Activated CD4-positive, alpha-beta memory T cell treated with anti-CD3 and anti-CD28 coated beads for 36 hours (primary cell): ENCODE measurements at regions of chr17 and their contacts with region 1.

Region 1: GRCh38 chr17:57440522-57441485 is 184.5 kb downstream of the MSI2 start:
- DNase-seq: peak; percentile 93
- H3K4me3 Mint-ChIP-seq: peak overlapping the region; percentile 37
- H3K27ac Mint-ChIP-seq: peak overlapping the region; percentile 98
- H3K4me1 Mint-ChIP-seq: peaks cover 84% of the 10 kb centered on the region
- H3K27me3 Mint-ChIP-seq: no peaks in the 10 kb centered on the region

Region 2: GRCh38 chr17:57130761-57131461 is 309.9 kb before region 1 on chr17:
- CTCF ChIA-PET with region 1: no interaction called
- POLR2A ChIA-PET with region 1: no interaction called
- intact Hi-C with region 1: loop called (anchors 2 kb)
- DNase-seq: peak; percentile 86
- H3K4me3 Mint-ChIP-seq: no peak overlapping the region
- H3K27ac Mint-ChIP-seq: no peak overlapping the region
- H3K4me1 Mint-ChIP-seq: peaks cover 4% of the 10 kb centered on the region
- H3K27me3 Mint-ChIP-seq: no peaks in the 10 kb centered on the region

Region 3: GRCh38 chr17:57255776-57256681 is 184.8 kb before region 1 on chr17 and contains the start of gene MSI2:
- CTCF ChIA-PET with region 1: interaction called, 13 read pairs
- POLR2A ChIA-PET with region 1: interaction called, 6 read pairs
- intact Hi-C with region 1: loop called (anchors 1 kb)
- DNase-seq: peak; percentile 90
- H3K4me3 Mint-ChIP-seq: peak within 1 kb of the TSS; percentile 85
- H3K27ac Mint-ChIP-seq: peak within 1 kb of the TSS; percentile 85
- H3K4me1 Mint-ChIP-seq: peaks cover 41% of the 10 kb centered on the region
- H3K27me3 Mint-ChIP-seq: no peaks in the 10 kb centered on the region
- total RNA-seq, gene MSI2: 65.7 to 71.9 TPM

Region 4: DNA sequence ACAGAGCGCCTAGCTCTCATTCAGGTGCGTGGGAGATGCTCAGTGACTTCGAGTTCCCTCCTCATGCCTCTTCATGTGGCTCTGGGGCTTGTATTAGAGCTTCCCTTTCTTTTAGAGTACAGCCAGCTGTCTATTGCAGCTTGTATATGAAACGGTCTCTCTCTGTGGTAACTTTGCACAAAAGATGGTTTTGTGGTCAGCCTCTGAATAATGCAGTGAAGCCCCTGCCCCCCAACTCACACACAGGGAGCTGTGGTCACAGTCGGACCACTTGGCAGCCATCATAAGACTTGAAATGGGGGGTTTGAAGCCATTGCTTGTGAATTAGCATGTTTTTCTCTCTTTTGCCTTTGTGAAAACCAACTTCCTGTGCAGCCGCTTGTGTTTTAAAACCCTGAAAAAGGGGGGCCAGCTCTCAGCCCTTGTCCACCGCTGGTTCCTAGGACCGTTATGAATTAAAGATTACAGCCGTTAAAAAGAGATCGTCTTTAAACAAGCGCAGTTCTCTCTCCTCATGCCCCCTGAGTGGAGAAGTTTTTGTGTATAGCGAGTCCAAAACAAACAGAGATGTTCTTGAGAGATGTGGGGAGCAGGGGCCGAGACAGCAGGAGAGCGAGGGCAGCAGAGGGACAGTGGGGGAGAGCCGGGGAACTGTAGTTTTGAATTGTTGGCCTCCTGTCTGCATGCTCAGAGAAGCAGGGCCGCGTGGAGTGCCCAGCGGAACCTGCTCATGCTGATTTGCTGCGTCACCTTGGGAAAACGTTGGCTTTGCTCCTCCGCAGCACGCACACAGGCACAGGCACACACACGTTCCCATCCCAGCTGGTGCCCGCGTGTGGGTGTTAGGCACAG is 14.5 kb after region 1 on chr17:
- CTCF ChIA-PET with region 1: interaction called, 17 read pairs
- POLR2A ChIA-PET with region 1: interaction called, 25 read pairs
- intact Hi-C with region 1: loop called (anchors 1 kb)
- DNase-seq: peak; percentile 53
- H3K4me3 Mint-ChIP-seq: no peak overlapping the region
- H3K27ac Mint-ChIP-seq: peak overlapping the region; percentile 82
- H3K4me1 Mint-ChIP-seq: peaks cover 78% of the 10 kb centered on the region
- H3K27me3 Mint-ChIP-seq: no peaks in the 10 kb centered on the region

Region 5: DNA sequence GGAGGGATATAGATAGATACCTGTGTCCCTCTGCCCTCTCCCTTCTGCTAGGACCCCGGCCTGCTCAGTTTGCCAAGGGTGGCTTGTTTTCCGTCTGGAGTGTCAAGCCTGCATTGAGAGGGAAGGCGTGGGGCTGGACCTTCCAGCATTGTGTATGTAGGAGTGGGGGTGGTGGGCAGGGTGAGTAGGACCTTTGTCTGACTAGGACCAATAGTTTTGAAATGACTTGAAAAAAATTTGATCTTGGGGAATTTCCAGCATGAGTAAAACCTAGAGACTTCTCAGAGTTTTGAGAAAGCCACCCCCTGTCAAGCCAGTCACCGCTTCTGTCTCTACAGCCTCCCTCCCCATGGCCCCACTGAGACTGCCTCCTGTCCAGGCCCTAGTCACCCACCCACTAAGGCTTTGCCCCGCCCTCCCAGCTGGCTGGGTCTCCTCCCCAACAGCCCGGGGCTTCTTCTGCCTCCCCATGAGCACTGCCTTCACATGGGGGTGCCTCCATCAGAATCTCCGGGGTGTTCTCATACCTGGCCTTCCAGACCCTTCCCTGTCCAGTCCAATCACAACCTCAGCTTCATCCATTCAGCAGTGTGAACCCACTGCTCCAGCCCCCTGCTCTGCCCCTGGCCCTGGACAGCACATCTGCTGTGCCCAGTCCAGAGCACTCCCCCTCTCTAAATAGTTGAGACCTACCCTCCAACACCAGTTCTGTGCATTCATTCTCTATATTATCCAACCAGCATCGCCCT is 22.5 kb after region 1 on chr17:
- CTCF ChIA-PET with region 1: interaction called, 17 read pairs
- POLR2A ChIA-PET with region 1: interaction called, 25 read pairs
- intact Hi-C with region 1: loop called (anchors 1 kb)
- DNase-seq: peak; percentile 95
- H3K4me3 Mint-ChIP-seq: peak overlapping the region; percentile 57
- H3K27ac Mint-ChIP-seq: peak overlapping the region; percentile 96
- H3K4me1 Mint-ChIP-seq: peaks cover 68% of the 10 kb centered on the region
- H3K27me3 Mint-ChIP-seq: no peaks in the 10 kb centered on the region

Region 6: DNA sequence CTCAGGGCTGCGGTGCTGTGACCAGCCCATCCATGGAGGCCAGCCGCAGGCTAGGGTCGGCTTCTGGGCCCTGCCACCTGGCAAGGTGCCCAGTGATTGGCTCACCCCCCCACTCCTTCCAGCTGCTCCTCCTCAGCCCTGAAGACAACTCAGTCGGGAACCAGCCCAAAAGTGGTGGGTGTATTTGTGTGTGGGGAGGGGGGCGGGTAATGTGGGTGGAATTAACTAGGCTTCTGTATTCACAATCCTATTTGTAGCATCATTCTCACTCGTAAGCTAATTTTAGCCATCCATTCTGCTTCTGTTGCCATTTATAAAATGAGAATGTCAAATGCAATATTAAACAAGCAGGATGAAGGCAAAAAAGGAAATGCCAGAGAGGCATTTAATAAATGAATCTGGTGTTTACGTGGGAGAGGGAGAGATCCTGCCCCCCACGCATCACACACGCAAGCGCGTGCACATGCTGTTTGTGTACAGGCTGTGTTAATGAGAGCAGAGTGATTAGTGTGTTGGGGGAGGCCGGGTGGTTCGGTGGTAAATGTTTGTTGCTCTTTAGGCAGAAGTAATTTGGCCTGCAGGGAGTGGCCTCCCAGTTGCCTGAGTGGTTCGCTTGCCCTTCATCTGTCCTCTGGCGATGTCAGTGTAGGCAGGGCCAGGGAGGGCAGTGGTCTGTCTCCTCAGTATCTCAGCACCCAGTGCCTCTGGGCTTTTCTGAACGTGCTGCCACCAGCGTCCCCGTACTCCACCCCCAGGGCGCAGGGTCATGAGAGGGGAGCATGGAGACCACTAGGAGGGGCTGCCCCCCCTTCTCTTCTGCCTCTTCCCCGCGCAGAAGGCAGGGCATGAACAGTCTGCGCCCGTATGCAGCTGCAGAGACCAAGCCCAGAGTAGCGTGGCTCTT is 164.2 kb after region 1 on chr17:
- CTCF ChIA-PET with region 1: no interaction called
- POLR2A ChIA-PET with region 1: no interaction called
- intact Hi-C with region 1: loop called (anchors 5 kb)
- DNase-seq: peak; percentile 54
- H3K4me3 Mint-ChIP-seq: peak overlapping the region; percentile 34
- H3K27ac Mint-ChIP-seq: peak overlapping the region; percentile 95
- H3K4me1 Mint-ChIP-seq: peaks cover 82% of the 10 kb centered on the region
- H3K27me3 Mint-ChIP-seq: no peaks in the 10 kb centered on the region

Region 7: GRCh38 chr17:57747221-57748017 is 306.6 kb after region 1 on chr17:
- CTCF ChIA-PET with region 1: no interaction called
- POLR2A ChIA-PET with region 1: no interaction called
- intact Hi-C with region 1: loop called (anchors 10 kb)
- DNase-seq: peak; percentile 53
- H3K4me3 Mint-ChIP-seq: no peak overlapping the region
- H3K27ac Mint-ChIP-seq: no peak overlapping the region
- H3K4me1 Mint-ChIP-seq: no peaks in the 10 kb centered on the region
- H3K27me3 Mint-ChIP-seq: peaks cover 2% of the 10 kb centered on the region